WTC11 (cell line): ENCODE measurements at regions of chr14 and their contacts with region 1.

Region 1: GRCh38 chr14:68363843-68364767 is 428.8 kb downstream of the ZFP36L1 start:
- DNase-seq: peak; percentile 68
- ATAC-seq: peak; percentile 76
- H3K4me3 Mint-ChIP-seq: peak overlapping the region; percentile 75
- H3K27ac Mint-ChIP-seq: peak overlapping the region; percentile 94
- H3K4me1 Mint-ChIP-seq: peaks cover 42% of the 10 kb centered on the region
- H3K27me3 Mint-ChIP-seq: peaks cover 5% of the 10 kb centered on the region; the same call in 1 of the 2 replicates
- CTCF ChIP-seq: no peak

Region 2: GRCh38 chr14:68297876-68298469 is 66.1 kb before region 1 on chr14:
- CTCF ChIA-PET with region 1: interaction called, 15 read pairs
- POLR2A ChIA-PET with region 1: no interaction called
- DNase-seq: peak; percentile 28
- ATAC-seq: peak; percentile 75
- H3K4me3 Mint-ChIP-seq: no peak overlapping the region
- H3K27ac Mint-ChIP-seq: peak overlapping the region; percentile 25; the same call in 1 of the 2 replicates
- H3K4me1 Mint-ChIP-seq: peaks cover 43% of the 10 kb centered on the region
- H3K27me3 Mint-ChIP-seq: no peaks in the 10 kb centered on the region; the same call in 1 of the 2 replicates
- CTCF ChIP-seq: no peak